Naive thymus-derived CD4-positive, alpha-beta T cell (primary cell): ENCODE measurements at regions of chr5 and their contacts with region 1.

Region 1: GRCh38 chr5:81851481-81852178 is 100.7 kb upstream of the SSBP2 start:
- DNase-seq: peak; percentile 76 to 92 (median 89)
- ATAC-seq: peak; percentile 95
- H3K4me3 ChIP-seq: peak overlapping the region; percentile 82
- H3K4me3 Mint-ChIP-seq: peak overlapping the region; percentile 92 to 98 (median 94)
- H3K27ac ChIP-seq: peak overlapping the region; percentile 71
- H3K27ac Mint-ChIP-seq: peak overlapping the region; percentile 96 to 100 (median 97)
- H3K4me1 ChIP-seq: peaks cover 18 to 22% of the 10 kb centered on the region in 2 donors
- H3K4me1 Mint-ChIP-seq: peaks cover 23 to 71% (median 56%) of the 10 kb centered on the region in 7 donors
- H3K27me3 ChIP-seq: no peaks in the 10 kb centered on the region
- H3K27me3 Mint-ChIP-seq: no peaks in the 10 kb centered on the region

Region 2: DNA sequence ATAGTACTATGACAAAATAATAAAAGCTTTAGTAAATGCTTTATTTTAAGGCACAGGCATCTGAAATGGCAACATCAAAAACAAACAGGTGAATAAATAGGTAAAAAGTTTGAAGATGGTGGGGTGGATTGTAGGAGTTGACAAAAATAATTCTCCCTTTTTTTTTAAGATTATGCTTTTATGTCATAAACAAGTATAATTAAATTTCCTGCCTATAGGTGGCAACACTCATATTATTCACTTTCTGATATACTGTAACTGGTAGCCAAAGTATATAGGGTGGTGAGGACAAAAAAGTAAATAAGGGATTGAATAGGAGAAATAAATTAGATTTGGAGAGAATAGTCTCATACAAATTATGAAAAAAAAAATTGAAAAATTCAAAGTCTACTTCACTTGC is 337.6 kb before region 1 on chr5:
- CTCF ChIA-PET with region 1: interaction called, 4 read pairs
- POLR2A ChIA-PET with region 1: interaction called, 3 read pairs
- intact Hi-C with region 1: loop called in 1 of 2 experiments (anchors 1 kb)
- DNase-seq: peak in 4 of 9 donors; percentile 20 to 32 (median 22)
- ATAC-seq: peak; percentile 55
- H3K4me3 ChIP-seq: no peak overlapping the region
- H3K4me3 Mint-ChIP-seq: no peak overlapping the region
- H3K27ac ChIP-seq: no peak overlapping the region
- H3K27ac Mint-ChIP-seq: peak overlapping the region in 2 of 9 donors; percentile 8 to 18
- H3K4me1 ChIP-seq: no peaks in the 10 kb centered on the region
- H3K4me1 Mint-ChIP-seq: peaks cover 0 to 24% (median 6%) of the 10 kb centered on the region in 7 donors
- H3K27me3 ChIP-seq: no peaks in the 10 kb centered on the region
- H3K27me3 Mint-ChIP-seq: no peaks in the 10 kb centered on the region

Region 3: DNA sequence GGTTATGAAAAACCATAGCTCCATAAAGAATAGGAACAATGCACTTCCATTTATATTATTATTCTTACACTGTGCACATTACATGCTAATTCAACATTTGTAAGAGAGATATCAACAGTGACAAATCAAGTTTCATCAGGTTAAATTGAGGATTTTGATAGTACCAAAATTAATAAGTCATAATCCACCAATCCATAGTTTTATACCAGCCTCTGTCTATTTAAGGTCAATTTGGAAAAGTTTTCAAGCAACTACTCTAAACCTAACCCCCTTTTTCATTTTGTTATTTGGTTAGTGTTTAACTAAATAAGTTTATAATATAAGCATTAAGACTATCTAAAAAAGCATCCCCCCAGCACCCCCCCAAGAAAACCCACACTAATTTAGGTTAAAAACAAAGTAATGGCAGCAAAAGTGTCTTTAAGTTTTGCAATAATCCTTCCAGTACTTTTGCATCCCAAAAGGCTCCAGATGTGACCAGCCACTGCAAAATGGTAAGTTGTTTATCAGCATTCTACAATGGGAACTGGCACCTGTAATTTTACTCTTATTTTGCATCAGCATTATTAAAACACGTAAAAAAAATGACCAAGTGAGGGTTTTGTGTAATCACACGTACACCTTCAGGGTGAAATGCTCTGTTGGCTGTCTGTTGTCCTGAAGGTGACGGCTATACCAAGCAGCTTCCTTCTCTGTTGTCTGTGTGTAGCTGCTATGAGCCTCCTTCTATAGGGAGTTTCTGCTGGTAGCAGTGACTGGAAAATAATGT is 64.0 kb before region 1 on chr5:
- CTCF ChIA-PET with region 1: no interaction called
- POLR2A ChIA-PET with region 1: no interaction called
- intact Hi-C with region 1: loop called in 1 of 2 experiments (anchors 1 kb)
- DNase-seq: peak in 1 of 9 donors; percentile 3
- ATAC-seq: no peak
- H3K4me3 ChIP-seq: no peak overlapping the region
- H3K4me3 Mint-ChIP-seq: no peak overlapping the region
- H3K27ac ChIP-seq: no peak overlapping the region
- H3K27ac Mint-ChIP-seq: peak overlapping the region in 1 of 9 donors; percentile 23
- H3K4me1 ChIP-seq: no peaks in the 10 kb centered on the region
- H3K4me1 Mint-ChIP-seq: peaks cover 6 to 22% (median 17%) of the 10 kb centered on the region in 7 donors
- H3K27me3 ChIP-seq: no peaks in the 10 kb centered on the region
- H3K27me3 Mint-ChIP-seq: peaks cover 0 to 2% (median 0%) of the 10 kb centered on the region in 5 donors

Region 4: GRCh38 chr5:81838307-81838906 is 13.2 kb before region 1 on chr5:
- CTCF ChIA-PET with region 1: interaction called, 20 read pairs
- POLR2A ChIA-PET with region 1: interaction called, 24 read pairs
- intact Hi-C with region 1: loop called in 1 of 2 experiments (anchors 1 kb)
- DNase-seq: peak in 6 of 9 donors; percentile 24 to 50 (median 41)
- ATAC-seq: peak; percentile 87
- H3K4me3 ChIP-seq: no peak overlapping the region
- H3K4me3 Mint-ChIP-seq: no peak overlapping the region
- H3K27ac ChIP-seq: no peak overlapping the region
- H3K27ac Mint-ChIP-seq: peak overlapping the region in 4 of 9 donors; percentile 1 to 51 (median 6)
- H3K4me1 ChIP-seq: peaks cover 0 to 8% of the 10 kb centered on the region in 2 donors
- H3K4me1 Mint-ChIP-seq: peaks cover 4 to 12% (median 8%) of the 10 kb centered on the region in 7 donors
- H3K27me3 ChIP-seq: no peaks in the 10 kb centered on the region
- H3K27me3 Mint-ChIP-seq: peaks cover 0 to 3% (median 0%) of the 10 kb centered on the region in 5 donors

Region 5: DNA sequence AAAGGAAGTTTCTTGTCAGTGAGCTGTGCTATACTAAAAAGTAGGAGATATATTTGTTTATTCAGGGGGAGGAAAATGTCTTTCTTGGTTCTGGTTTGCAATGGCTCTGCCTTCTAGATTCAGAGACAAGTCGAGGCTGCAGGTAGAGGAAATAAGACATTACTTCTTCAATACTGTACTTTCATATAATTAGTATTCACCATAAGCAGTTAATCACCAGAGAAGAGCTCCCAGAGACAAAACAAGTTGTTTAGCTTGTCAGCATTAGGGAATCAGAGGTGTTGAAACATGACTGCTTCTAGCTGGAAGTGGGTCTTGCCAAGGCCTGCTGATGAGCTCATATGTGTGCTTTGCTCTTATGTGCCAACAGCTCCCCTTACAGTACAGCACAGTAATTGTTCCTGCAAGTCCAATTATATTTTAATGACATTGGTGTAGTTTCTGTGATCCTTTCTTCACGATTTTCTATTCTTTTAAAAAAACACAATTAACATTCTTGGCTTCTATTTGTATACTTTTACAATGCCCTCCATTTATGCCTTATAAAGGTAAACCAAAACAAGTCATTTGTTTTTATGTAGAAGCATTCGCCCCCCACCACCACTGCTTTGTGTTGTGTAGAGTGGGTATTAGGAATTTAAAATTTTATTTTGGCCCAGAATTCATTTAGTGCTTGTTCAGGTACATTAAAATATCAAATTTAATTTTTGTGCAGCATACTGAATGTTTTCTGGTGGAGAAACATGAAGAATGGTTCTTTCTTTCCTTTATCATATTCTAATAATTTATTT is 314.3 kb after region 1 on chr5:
- CTCF ChIA-PET with region 1: interaction called, 14 read pairs
- POLR2A ChIA-PET with region 1: interaction called, 3 read pairs
- intact Hi-C with region 1: loop called (anchors 2 to 5 kb)
- DNase-seq: peak in 7 of 9 donors; percentile 39 to 70 (median 58)
- ATAC-seq: peak; percentile 96
- H3K4me3 ChIP-seq: no peak overlapping the region
- H3K4me3 Mint-ChIP-seq: no peak overlapping the region
- H3K27ac ChIP-seq: no peak overlapping the region
- H3K27ac Mint-ChIP-seq: peak overlapping the region in 6 of 9 donors; percentile 3 to 65 (median 17)
- H3K4me1 ChIP-seq: no peaks in the 10 kb centered on the region
- H3K4me1 Mint-ChIP-seq: peaks cover 0 to 12% (median 7%) of the 10 kb centered on the region in 7 donors
- H3K27me3 ChIP-seq: no peaks in the 10 kb centered on the region
- H3K27me3 Mint-ChIP-seq: no peaks in the 10 kb centered on the region

Region 6: GRCh38 chr5:82351754-82352145 is 500.1 kb after region 1 on chr5:
- CTCF ChIA-PET with region 1: no interaction called
- POLR2A ChIA-PET with region 1: no interaction called
- intact Hi-C with region 1: loop called in 1 of 2 experiments (anchors 10 kb)
- DNase-seq: peak in 7 of 9 donors; percentile 8 to 54 (median 46)
- ATAC-seq: peak; percentile 73
- H3K4me3 ChIP-seq: no peak overlapping the region
- H3K4me3 Mint-ChIP-seq: no peak overlapping the region
- H3K27ac ChIP-seq: no peak overlapping the region
- H3K27ac Mint-ChIP-seq: peak overlapping the region in 1 of 9 donors; percentile 24
- H3K4me1 ChIP-seq: peaks cover 5 to 6% of the 10 kb centered on the region in 2 donors
- H3K4me1 Mint-ChIP-seq: peaks cover 3 to 58% (median 3%) of the 10 kb centered on the region in 7 donors
- H3K27me3 ChIP-seq: no peaks in the 10 kb centered on the region
- H3K27me3 Mint-ChIP-seq: no peaks in the 10 kb centered on the region